ENCODE measurements at regions of chr15 and their contacts with region 1.

Region 1: GRCh38 chr15:89177633-89178306 is 43.6 kb downstream of the RLBP1 start:
- DNase-seq: peak; percentile 52
- H3K4me3 ChIP-seq: no peak overlapping the region
- H3K27ac ChIP-seq: no peak overlapping the region
- H3K4me1 ChIP-seq: no peaks in the 10 kb centered on the region
- H3K27me3 ChIP-seq: no peaks in the 10 kb centered on the region
- CTCF ChIP-seq: peak; percentile 87 to 92

Region 2: GRCh38 chr15:88904624-88905327 is 273.0 kb before region 1 on chr15:
- CTCF ChIA-PET with region 1: no interaction called
- dilution Hi-C with region 1: loop called (anchors 10 kb)
- in situ Hi-C with region 1: loop called in 1 of 2 experiments (anchors 10 kb)
- intact Hi-C with region 1: loop called (anchors 1 kb)
- DNase-seq: peak; percentile 49
- H3K4me3 ChIP-seq: no peak overlapping the region
- H3K27ac ChIP-seq: no peak overlapping the region
- H3K4me1 ChIP-seq: peaks cover 3% of the 10 kb centered on the region
- H3K27me3 ChIP-seq: no peaks in the 10 kb centered on the region
- CTCF ChIP-seq: peak; percentile 97 to 98

Region 3: DNA sequence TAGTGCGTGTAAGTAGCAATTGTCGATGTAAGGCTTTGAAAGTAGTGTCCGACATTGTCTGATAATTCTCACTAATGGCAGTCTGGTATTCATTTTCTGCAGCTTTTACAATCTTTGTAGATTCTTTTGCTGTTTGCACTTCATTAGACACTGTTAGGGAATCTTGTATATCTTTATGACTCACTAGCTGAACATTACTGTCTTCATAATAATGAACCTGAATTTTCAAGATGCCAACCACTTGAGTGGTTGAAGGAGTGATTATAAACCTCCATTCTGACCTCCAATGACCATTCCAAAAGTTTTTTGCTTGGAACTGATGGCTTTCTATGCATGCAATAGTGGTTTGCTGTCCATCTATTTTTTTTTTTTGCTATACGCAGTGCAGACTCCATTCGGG is 188.2 kb before region 1 on chr15:
- CTCF ChIA-PET with region 1: no interaction called
- dilution Hi-C with region 1: no loop called
- in situ Hi-C with region 1: no loop called
- intact Hi-C with region 1: no loop called
- DNase-seq: no peak
- H3K4me3 ChIP-seq: no peak overlapping the region
- H3K27ac ChIP-seq: no peak overlapping the region
- H3K4me1 ChIP-seq: no peaks in the 10 kb centered on the region
- H3K27me3 ChIP-seq: no peaks in the 10 kb centered on the region
- CTCF ChIP-seq: no peak

Region 4: DNA sequence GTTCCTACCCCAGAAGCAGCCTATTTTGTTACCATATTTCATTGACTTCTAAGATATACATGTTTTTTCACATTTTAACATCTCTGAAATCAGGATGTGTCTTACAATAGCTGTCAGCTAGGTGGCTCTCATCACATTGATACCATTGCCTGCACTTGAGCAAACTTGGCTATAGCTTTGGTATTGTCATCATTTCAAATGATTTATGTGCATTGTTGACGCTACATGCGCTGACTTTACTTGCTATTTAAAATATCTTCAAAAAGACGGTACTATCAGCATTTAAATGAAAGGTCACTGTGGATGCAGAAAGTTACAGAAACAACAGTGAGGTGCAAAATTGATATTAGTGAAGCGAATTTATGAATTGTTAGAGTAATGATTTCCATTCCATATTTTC is 143.5 kb before region 1 on chr15:
- CTCF ChIA-PET with region 1: no interaction called
- dilution Hi-C with region 1: no loop called
- in situ Hi-C with region 1: no loop called
- intact Hi-C with region 1: loop called (anchors 1 kb)
- DNase-seq: peak; percentile 9
- H3K4me3 ChIP-seq: no peak overlapping the region
- H3K27ac ChIP-seq: no peak overlapping the region
- H3K4me1 ChIP-seq: no peaks in the 10 kb centered on the region
- H3K27me3 ChIP-seq: no peaks in the 10 kb centered on the region
- CTCF ChIP-seq: peak; percentile 33 to 54

Region 5: GRCh38 chr15:89057504-89058133 is 120.2 kb before region 1 on chr15:
- CTCF ChIA-PET with region 1: interaction called, 8 read pairs
- dilution Hi-C with region 1: loop called (anchors 5 kb)
- in situ Hi-C with region 1: loop called (anchors 5 kb)
- intact Hi-C with region 1: loop called (anchors 1 kb)
- DNase-seq: peak; percentile 56
- H3K4me3 ChIP-seq: no peak overlapping the region
- H3K27ac ChIP-seq: no peak overlapping the region
- H3K4me1 ChIP-seq: no peaks in the 10 kb centered on the region
- H3K27me3 ChIP-seq: no peaks in the 10 kb centered on the region
- CTCF ChIP-seq: peak; percentile 97 to 99

Region 6: GRCh38 chr15:89129123-89129815 is 48.5 kb before region 1 on chr15:
- CTCF ChIA-PET with region 1: no interaction called
- dilution Hi-C with region 1: loop called (anchors 5 kb)
- in situ Hi-C with region 1: no loop called
- intact Hi-C with region 1: loop called (anchors 2 kb)
- DNase-seq: peak; percentile 29
- H3K4me3 ChIP-seq: no peak overlapping the region
- H3K27ac ChIP-seq: peak overlapping the region; percentile 0
- H3K4me1 ChIP-seq: peaks cover 30% of the 10 kb centered on the region
- H3K27me3 ChIP-seq: no peaks in the 10 kb centered on the region
- CTCF ChIP-seq: peak; percentile 62 to 77

Region 7: DNA sequence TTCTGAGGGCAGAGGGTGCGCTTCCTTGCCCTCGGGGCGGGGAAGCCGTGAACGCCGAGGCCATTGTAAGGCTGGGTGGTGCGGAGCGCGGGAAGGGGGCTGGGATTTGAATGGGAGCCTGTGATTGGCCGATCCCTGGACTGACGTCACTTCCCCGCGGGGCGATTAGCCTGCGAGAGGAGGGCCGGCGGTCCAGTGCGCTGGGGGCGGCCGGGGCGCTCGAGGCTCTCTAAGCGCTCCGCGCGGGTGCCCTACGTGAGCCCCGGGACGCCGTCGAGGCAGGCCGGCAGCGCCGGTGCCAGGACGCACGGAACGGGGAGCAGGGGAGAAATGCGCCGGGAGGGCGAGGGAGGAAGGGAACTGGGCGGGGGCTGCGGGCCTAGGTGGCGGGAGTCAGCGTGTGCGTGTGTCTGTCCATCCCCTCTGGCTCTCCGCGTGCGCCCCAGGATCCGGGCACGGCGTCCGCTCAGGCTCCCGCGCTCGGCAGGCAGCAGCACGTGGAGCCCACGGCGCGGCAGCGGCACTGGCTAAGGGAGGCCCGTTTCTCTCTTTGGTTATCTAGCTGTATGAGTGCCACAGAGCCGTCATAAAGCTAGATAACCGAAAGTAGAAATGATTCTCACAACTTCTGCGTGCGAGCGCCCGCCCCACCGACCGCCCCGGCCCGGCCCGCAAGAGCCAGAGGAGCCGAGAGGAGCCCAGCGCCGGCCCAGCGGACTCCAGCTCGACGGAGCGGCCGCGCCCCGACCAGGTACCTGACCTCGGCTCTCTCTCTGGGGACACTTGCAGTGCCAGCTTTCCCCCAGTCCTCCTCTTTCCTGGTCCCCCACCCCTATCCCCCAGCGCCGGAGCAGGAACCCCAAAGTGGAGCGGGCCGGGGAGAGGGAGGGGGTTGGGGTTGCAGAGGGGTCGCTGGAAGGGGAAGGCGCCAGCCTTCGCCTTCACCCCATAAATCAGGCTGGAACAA is 190.0 kb after region 1 on chr15:
- CTCF ChIA-PET with region 1: no interaction called
- dilution Hi-C with region 1: no loop called
- in situ Hi-C with region 1: no loop called
- intact Hi-C with region 1: no loop called
- DNase-seq: no peak
- H3K4me3 ChIP-seq: no peak overlapping the region
- H3K27ac ChIP-seq: no peak overlapping the region
- H3K4me1 ChIP-seq: peaks cover 6% of the 10 kb centered on the region
- H3K27me3 ChIP-seq: peaks cover 79% of the 10 kb centered on the region
- CTCF ChIP-seq: no peak

Measured in mammary epithelial cell (primary cell).